ENCODE measurements at regions of chr1 and their contacts with region 1.

Region 1: GRCh38 chr1:248807067-248807737 is 18.5 kb downstream of the SH3BP5L start:
- DNase-seq: peak; percentile 85

Region 2: DNA sequence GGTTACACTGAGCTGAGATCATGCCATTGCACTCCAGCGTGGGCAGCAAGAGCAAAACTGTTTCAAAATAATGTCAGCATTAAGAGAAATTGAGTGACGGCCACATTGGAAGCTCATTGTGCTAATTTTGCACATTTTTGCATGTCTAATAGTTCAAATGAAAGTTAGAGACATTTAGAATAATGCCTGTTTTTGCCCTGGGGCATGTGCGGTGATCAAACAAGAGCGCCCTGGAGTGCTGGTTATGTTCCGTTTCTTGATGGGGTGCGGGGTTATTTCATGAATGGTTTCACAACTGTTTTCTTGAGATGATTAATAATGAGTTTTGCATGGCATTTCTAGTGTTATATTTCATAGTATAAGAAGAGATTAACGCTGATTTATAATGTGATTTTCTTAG is 185.4 kb before region 1 on chr1:
- intact Hi-C with region 1: loop called (anchors 1 kb)
- DNase-seq: no peak

Region 3: GRCh38 chr1:248703674-248704073 is 103.5 kb before region 1 on chr1:
- intact Hi-C with region 1: loop called (anchors 5 kb)
- DNase-seq: no peak

Region 4: DNA sequence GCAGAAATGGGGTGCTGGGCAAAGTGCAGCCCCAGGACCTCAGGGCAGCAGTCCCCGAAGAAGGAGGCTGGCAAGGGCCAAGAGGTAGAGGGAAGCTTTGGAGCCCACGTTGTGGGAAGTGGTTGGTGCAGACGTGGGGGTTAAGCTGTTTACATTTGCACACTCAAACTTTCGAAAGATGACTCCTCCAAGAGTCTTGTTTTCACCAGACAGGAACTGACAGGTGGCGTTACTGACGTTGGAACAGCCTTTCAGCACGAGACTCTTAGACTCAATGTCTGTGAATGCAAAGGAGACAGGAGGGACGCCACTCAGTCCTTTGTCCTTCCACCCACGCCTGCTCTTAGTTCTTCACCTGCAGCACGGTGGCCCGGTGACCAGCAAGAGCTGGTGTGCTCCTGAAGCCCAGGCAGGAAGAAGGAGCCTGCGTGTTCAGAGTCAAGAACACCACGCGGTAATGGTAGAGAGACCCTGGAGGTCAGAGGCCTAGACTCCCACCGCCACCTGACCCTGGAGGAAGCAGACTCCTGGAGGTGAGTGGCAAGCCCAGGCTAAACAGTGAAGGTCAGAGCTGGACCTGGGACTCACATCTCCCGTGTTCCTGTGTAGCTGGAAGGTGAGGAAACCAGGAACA is 67.5 kb before region 1 on chr1:
- intact Hi-C with region 1: no loop called
- DNase-seq: no peak

Region 5: DNA sequence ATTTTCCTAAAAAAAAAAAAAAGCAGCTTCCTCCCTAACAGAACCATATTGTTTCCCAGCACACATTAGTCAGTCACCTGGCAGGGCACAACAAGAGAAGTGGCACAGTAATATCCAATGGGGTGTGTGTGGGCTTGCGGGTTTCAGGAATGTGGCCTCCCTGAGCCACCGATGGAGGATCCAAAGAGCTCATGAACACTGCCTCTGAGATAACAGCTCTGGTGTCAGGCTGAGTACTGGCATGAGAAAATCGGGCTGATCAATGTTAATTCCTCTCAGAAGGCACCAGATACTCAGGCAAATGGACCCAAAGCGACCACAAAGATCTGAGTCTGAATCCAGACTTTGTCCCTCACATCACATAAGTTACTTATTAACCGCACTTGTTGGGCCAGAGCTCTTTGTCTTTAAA is 49.4 kb before region 1 on chr1:
- intact Hi-C with region 1: no loop called
- DNase-seq: no peak

Measured in cardiac septum (tissue), 1 donor.